ENCODE measurements at regions of chr16 and their contacts with region 1.

Region 1: DNA sequence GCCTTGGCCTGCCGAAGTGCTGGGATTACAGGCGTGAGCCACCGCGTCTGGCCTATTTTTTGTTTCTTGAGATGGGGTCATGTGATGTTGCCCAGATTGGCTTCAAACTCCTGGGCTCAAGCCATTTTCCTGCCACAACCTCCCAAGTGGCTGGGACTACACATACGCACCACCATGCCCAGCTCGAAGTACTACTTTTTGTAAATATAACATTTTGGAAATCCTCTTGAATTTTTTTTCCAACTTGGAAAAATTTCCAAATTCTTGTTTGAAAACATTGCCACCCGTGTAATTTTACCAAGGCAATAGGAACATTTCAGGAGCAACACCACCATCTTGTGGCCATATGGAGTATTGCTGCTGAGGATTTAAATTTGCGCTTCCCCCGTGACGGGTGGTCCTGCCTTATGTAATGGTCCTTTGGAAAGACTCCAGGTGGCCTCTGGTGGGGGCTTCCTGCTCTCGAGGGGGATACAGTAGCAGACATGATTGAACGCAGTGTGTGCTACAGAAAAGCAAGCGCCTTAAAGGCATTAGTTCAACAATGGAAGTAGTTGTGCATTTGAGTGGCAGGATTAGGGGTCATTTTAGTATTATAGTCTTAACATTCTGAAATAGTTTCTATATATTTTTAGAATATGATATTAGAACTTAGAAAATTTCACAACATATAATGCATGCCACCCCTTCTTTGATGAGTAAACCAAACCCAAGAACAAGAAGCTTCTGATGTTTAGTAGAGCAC is 8.0 kb downstream of the FLYWCH1 start:
- DNase-seq: peak; percentile 77
- ATAC-seq: peak; percentile 63
- H3K4me3 Mint-ChIP-seq: no peak overlapping the region
- H3K27ac Mint-ChIP-seq: peak overlapping the region; percentile 54
- H3K4me1 Mint-ChIP-seq: peaks cover 18% of the 10 kb centered on the region
- H3K27me3 Mint-ChIP-seq: no peaks in the 10 kb centered on the region

Region 2: DNA sequence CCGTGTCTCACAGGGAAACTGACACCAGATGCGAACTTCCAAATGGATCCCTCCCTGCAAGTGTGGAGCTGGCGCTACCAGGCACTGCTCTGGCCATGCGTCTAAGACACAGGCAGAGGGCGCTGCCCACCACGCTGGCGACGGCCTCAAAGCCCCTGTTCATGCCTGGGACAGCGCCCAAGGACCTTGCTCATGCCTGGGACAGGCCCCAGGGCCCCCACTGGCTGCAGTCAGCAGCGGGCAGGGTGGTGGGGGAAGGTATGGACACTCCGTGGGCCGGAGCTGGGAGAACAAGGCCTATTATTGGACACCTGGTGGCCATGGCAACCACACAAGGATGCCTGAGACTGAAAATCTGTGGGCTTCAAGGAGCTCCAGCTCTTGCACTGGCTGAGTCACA is 80.8 kb before region 1 on chr16:
- CTCF ChIA-PET with region 1: interaction called, 14 read pairs
- DNase-seq: peak; percentile 74
- ATAC-seq: peak; percentile 82
- H3K4me3 Mint-ChIP-seq: no peak overlapping the region
- H3K27ac Mint-ChIP-seq: no peak overlapping the region
- H3K4me1 Mint-ChIP-seq: peaks cover 24% of the 10 kb centered on the region
- H3K27me3 Mint-ChIP-seq: peaks cover 5% of the 10 kb centered on the region

Region 3: DNA sequence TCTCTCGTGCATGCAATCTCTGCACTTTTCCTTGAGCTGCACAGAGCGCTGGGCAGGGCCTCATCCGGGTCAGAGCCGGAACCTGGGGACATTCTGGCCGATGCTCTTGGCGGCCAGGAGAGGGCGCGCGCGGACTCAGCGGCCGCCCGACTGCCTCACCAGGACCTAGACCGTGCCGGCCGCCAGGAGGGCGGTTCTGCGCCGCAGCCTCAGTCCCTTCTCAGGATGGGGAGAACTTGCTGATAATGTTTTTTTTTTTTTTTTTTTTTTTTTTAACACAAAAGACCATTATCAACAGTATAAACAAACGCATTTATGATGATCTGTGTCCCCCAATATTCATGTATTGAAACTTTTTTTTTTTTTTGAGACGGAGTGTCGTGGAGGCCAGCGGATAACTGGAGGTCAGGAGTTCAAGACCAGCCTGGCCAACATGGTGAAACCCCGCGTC is 44.7 kb before region 1 on chr16:
- CTCF ChIA-PET with region 1: interaction called, 30 read pairs
- DNase-seq: peak; percentile 81
- ATAC-seq: peak; percentile 100
- H3K4me3 Mint-ChIP-seq: no peak overlapping the region
- H3K27ac Mint-ChIP-seq: no peak overlapping the region
- H3K4me1 Mint-ChIP-seq: peaks cover 3% of the 10 kb centered on the region
- H3K27me3 Mint-ChIP-seq: no peaks in the 10 kb centered on the region

Region 4: DNA sequence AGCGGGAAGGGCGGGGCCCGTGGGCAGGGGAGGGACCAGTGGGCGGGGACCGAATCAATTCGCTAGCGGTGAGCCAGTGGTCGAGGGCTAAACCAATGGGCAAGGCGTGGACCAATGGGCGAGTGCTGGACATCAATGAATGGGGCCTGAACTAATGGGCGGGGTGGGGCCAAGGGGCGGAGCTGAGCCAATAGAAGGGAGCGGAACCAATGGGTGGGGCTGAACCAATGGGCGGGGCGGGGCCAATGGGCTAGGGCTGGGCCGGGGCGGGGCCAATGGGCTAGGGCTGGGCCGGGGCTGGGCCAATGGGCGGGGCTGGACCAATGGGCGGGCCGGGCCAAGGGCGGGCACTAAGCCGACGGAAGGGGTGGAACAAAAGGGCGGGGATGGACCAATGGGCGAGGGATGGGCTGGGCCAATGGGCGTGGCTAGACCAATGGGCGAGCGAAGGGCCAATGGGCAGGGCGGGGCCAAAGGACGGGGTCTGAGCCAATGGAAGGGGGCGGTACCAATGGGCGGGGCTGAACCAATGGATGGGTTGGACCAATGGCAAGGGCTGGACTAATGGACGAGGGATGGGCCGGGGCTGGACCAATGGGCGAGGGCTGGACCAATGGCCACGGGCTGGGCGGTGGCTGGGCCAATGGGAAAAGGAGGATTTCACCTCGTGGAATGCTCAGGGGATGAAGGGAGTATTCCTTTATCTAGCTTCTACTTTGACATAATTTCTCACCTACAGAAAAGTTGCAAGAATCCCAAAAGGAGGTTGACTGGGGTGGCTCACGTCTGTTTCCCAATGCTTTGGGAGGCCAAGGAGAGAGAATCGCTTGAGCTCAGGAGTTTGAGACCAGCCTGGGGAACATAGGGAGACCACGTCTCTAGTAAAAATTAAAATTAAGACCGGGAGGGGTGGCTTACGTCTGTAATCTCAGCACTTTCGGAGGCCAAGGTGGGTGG is 14.0 kb before region 1 on chr16:
- CTCF ChIA-PET with region 1: interaction called, 32 read pairs
- DNase-seq: peak; percentile 99
- ATAC-seq: peak; percentile 81
- H3K4me3 Mint-ChIP-seq: peak overlapping the region; percentile 94
- H3K27ac Mint-ChIP-seq: peak overlapping the region; percentile 91
- H3K4me1 Mint-ChIP-seq: peaks cover 22% of the 10 kb centered on the region
- H3K27me3 Mint-ChIP-seq: peaks cover 5% of the 10 kb centered on the region

Region 5: DNA sequence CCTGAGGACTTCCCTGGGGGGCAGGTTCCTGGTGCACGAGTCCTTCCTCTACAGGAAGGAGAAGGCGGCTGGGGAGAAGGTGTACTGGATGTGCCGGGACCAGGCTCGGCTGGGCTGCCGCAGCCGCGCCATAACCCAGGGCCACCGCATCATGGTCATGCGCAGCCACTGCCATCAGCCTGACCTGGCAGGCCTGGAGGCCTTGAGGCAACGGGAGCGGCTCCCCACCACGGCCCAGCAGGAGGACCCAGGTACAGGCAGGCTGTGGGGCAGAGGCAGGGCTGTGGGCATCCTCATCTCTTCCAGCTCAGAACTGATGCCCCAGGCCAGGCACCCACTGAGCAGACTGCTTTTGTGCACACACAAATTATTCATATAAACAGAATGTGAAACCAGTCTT is 18.5 kb after region 1 on chr16:
- CTCF ChIA-PET with region 1: no interaction called
- DNase-seq: no peak
- ATAC-seq: no peak
- H3K4me3 Mint-ChIP-seq: no peak overlapping the region
- H3K27ac Mint-ChIP-seq: no peak overlapping the region
- H3K4me1 Mint-ChIP-seq: no peaks in the 10 kb centered on the region
- H3K27me3 Mint-ChIP-seq: no peaks in the 10 kb centered on the region

Region 6: GRCh38 chr16:2977406-2977805 is 57.7 kb after region 1 on chr16:
- CTCF ChIA-PET with region 1: no interaction called
- DNase-seq: no peak
- ATAC-seq: no peak
- H3K4me3 Mint-ChIP-seq: no peak overlapping the region
- H3K27ac Mint-ChIP-seq: no peak overlapping the region
- H3K4me1 Mint-ChIP-seq: peaks cover 24% of the 10 kb centered on the region
- H3K27me3 Mint-ChIP-seq: peaks cover 3% of the 10 kb centered on the region

Region 7: GRCh38 chr16:3123986-3124886 is 204.6 kb after region 1 on chr16:
- CTCF ChIA-PET with region 1: no interaction called
- DNase-seq: peak; percentile 99
- ATAC-seq: peak; percentile 88
- H3K4me3 Mint-ChIP-seq: peak overlapping the region; percentile 98
- H3K27ac Mint-ChIP-seq: peak overlapping the region; percentile 99
- H3K4me1 Mint-ChIP-seq: peaks cover 49% of the 10 kb centered on the region
- H3K27me3 Mint-ChIP-seq: no peaks in the 10 kb centered on the region

Measured in activated CD8-positive, alpha-beta memory T cell treated with anti-CD3 and anti-CD28 coated beads, Interleukin-2, amount 10 ng/mL, durations not matched to agents 7 days and 5 days (primary cell).